AG04449 (cell line): ENCODE measurements at regions of chr2 and their contacts with region 1.

Region 1: DNA sequence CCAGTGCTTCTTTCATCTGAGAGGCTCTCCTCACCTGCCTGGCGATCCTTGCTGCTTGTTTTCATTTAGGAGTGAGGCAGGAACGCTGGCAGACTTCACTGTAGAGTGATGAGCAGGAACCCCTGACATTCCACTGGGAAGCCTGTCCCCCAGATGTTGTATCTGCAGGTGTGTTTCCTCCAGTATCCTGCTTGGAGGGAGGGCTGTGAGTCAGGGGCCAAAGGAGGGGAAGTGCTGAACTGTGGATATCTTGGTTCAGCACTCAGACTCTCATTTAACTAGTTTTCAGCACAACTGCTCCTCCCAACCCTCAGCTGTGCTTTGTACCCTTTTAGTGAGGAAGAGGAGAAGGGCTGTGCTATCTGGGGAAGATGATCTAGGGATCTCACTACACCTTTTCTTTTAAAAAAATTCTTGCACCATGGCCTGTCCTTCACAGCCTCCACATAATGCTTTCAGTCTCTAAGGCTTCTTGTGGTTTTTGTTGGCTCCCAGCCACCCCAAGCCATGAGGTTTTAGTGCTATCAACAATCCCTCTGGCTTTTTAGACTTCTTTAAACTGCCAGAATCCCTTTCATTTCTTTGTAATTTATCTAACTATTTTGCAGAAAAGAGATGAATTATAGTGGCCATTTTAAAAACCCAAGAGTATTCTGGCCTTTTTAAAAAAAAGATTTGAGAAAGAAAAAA is 11.2 kb downstream of the ANKAR start:
- DNase-seq: peak; percentile 14
- H3K4me3 ChIP-seq: no peak overlapping the region
- CTCF ChIP-seq: no peak

Region 2: DNA sequence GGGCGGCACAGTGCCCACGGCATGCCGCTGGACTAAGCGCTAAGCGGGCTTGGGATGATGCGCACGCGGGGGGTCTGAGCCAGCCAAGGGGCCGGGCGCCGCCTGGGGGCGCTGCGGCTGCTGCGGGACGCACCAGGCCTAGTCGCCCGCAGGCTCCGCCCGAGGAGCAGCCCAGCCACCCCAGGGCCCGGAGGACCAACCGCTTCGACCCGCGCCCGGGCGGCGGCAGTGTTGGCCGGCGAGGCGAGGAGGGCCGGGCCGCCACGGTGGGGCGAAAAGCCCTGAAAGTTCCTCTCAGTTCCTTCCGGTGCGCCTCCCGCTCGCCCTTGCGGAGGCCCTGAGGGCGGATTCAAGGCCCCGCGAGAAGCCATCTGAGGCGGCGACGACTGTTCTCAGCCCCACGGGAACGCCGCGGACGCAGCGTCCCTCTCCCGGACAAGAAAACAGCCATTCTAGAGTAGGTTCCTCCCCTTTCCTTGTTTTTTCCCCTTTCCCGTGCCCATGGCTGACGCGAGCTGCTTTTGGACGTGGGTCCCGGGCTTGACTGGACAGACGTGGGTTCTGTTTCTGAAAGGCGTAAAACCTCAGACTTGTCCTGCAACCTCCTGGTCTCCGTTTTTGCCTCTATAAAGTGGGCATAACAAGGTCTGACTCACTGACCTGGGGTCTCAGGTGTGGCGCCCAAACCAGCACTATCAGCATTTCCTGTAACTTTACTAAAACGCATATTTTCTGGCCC is 11.1 kb before region 1 on chr2 and contains the start of gene ANKAR:
- CTCF ChIA-PET with region 1: interaction called, 55 read pairs
- POLR2A ChIA-PET with region 1: no interaction called
- DNase-seq: peak; percentile 24
- H3K4me3 ChIP-seq: peak within 1 kb of the TSS; percentile 77
- CTCF ChIP-seq: peak; percentile 88